HepG2 (cell line): ENCODE measurements at regions of chr10 and their contacts with region 1.

Region 1: GRCh38 chr10:112949875-112950507 is at the start of gene TCF7L2:
- DNase-seq: peak; percentile 98
- ATAC-seq: peak; percentile 81
- H3K4me3 ChIP-seq: peak within 1 kb of the TSS; percentile 81 to 99 (median 93)
- H3K27ac ChIP-seq: peak within 1 kb of the TSS; percentile 91
- H3K4me1 ChIP-seq: peaks cover 54% of the 10 kb centered on the region
- H3K27me3 ChIP-seq: no peaks in the 10 kb centered on the region; a peak in 1 of 5 replicates
- CTCF ChIP-seq: peak; percentile 36
- EP300 ChIP-seq: peak in 1 of 2 experiments; percentile 47; a peak in 1 of 4 replicates
- POLR2A ChIP-seq: peak; percentile 55 to 56; a peak in 3 of 4 replicates
- RAD21 ChIP-seq: no peak
- total RNA-seq, gene TCF7L2: 3.5 and 3.9 TPM in 2 replicates

Region 2: GRCh38 chr10:112631501-112632410 is 318.2 kb before region 1 on chr10:
- CTCF ChIA-PET with region 1: no interaction called
- POLR2A ChIA-PET with region 1: no interaction called
- in situ Hi-C with region 1: no loop called
- intact Hi-C with region 1: loop called (anchors 2 kb)
- DNase-seq: peak; percentile 98
- ATAC-seq: peak; percentile 99
- H3K4me3 ChIP-seq: no peak overlapping the region; a peak in 1 of 6 replicates
- H3K27ac ChIP-seq: peak overlapping the region; percentile 83
- H3K4me1 ChIP-seq: peaks cover 59% of the 10 kb centered on the region
- H3K27me3 ChIP-seq: no peaks in the 10 kb centered on the region
- CTCF ChIP-seq: no peak
- EP300 ChIP-seq: peak in 1 of 2 experiments; percentile 89; a peak in 2 of 4 replicates
- POLR2A ChIP-seq: no peak
- RAD21 ChIP-seq: no peak

Region 3: GRCh38 chr10:112811740-112812551 is 138.0 kb before region 1 on chr10:
- CTCF ChIA-PET with region 1: no interaction called
- POLR2A ChIA-PET with region 1: interaction called, 3 read pairs
- in situ Hi-C with region 1: loop called (anchors 5 kb)
- intact Hi-C with region 1: loop called (anchors 5 kb)
- DNase-seq: peak; percentile 95
- ATAC-seq: peak; percentile 92
- H3K4me3 ChIP-seq: no peak overlapping the region
- H3K27ac ChIP-seq: no peak overlapping the region
- H3K4me1 ChIP-seq: peaks cover 54% of the 10 kb centered on the region
- H3K27me3 ChIP-seq: no peaks in the 10 kb centered on the region
- CTCF ChIP-seq: no peak
- EP300 ChIP-seq: peak in 1 of 2 experiments; percentile 91; a peak in 2 of 4 replicates
- POLR2A ChIP-seq: no peak
- RAD21 ChIP-seq: no peak; the same call in none of the 2 replicates

Region 4: DNA sequence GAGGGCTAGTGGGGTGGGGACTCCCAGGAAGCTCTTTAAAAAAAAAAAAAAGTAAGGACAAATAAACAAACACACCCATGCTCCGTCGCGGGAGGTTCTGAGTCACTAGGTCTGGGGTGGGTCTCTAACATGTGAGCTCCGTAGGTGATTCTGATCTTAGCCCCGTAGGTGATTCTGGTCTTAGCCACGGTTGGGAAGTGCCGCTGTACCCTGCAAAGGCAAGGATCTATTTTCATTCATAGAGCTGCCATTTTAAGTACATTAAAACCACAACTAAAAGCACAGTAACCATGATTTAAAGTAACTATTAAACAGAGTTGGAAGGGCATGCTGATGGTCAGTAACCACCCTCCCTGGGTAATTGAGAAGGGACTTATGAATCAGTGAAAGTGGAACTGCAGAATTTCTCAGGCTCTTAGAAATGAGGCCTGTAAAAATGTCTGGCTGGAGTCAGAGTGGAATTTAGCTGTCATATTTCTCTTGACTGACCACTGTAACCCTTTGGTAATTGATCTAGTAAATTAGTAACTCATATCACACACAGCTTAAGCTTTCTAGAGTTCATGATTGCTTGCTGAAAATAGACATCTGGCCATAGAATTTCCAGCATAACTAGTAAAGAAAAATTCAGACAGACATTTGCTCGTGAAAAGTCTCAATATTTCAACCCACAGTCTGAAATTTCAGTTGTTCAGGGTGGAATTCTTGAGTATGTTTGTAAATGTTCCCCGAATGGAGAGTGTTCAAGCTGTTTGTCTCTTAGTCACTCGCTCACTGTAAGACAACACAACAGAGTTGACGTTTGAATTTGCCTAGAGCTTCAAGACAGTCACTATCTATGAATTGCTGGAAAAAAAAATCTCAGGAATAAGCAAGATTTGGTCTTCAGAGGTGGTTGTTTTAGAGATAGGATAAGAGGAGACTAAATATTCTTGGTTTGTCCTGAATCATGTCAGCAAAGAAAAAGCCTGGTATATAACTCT is 34.1 kb before region 1 on chr10:
- CTCF ChIA-PET with region 1: no interaction called
- POLR2A ChIA-PET with region 1: interaction called, 18 read pairs
- in situ Hi-C with region 1: no loop called
- intact Hi-C with region 1: no loop called
- DNase-seq: peak; percentile 58
- ATAC-seq: peak; percentile 89
- H3K4me3 ChIP-seq: peak overlapping the region; percentile 37 to 48 (median 41); a peak in 4 of 6 replicates
- H3K27ac ChIP-seq: peak overlapping the region; percentile 47
- H3K4me1 ChIP-seq: peaks cover 47% of the 10 kb centered on the region
- H3K27me3 ChIP-seq: no peaks in the 10 kb centered on the region
- CTCF ChIP-seq: no peak
- EP300 ChIP-seq: no peak
- POLR2A ChIP-seq: no peak
- RAD21 ChIP-seq: no peak

Region 5: DNA sequence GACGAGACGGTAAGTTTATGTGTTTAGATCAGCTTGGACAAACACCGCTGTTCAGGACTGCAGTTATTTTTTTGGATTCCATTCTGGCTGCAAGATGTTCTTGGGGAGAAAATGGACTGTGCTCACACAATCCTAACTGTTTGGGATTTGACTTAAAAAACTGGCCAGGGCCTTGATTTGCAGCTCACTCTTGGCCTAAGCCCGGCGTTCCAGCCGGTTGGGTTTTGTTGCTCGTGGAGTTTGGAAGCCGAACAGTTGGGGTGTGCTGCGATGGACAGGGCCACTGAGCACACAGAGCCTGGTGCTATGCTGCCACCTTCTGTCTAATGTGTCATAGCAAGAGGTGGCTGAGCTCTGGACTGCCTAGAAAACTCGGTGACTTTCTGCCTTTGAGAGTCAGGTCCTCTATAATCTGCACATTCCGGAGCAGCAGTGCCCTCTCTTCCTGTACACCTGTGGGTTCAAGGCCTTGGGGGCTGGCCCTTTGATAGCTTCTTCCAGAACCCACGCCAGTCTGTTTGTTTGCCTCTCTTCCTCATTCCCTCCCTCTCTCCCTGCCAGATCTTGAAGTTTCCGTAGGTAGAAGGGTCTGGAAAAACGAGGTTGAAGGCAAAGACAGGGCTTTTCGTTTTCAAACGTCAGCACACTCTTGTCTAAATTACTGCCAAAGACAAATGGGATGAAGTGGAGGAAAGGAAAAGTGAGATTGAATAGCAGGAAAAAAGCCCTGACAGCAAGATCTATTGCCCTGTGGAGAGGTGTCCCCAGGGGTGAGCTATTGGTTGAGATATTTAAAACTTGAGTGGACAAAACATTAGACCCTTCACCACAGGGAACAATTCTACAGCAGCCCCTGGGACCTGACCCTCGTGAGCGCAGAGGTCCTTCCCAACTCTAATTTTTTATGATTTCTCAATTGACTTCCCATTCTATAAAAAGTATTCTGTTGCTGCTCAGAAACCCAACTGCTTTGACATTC is 435.3 kb after region 1 on chr10:
- CTCF ChIA-PET with region 1: no interaction called
- POLR2A ChIA-PET with region 1: no interaction called
- in situ Hi-C with region 1: no loop called
- intact Hi-C with region 1: loop called (anchors 5 kb)
- DNase-seq: peak; percentile 71
- ATAC-seq: peak; percentile 100
- H3K4me3 ChIP-seq: peak overlapping the region in 1 of 3 experiments; percentile 15; a peak in 2 of 6 replicates
- H3K27ac ChIP-seq: no peak overlapping the region
- H3K4me1 ChIP-seq: peaks cover 13% of the 10 kb centered on the region
- H3K27me3 ChIP-seq: peaks cover under 1 to 63% of the 10 kb centered on the region in 2 experiments; a peak in 4 of 5 replicates
- CTCF ChIP-seq: peak; percentile 96
- EP300 ChIP-seq: no peak
- POLR2A ChIP-seq: no peak
- RAD21 ChIP-seq: peak; percentile 90